Panc1 (cell line): ENCODE measurements at regions of chr20 and their contacts with region 1.

Region 1: GRCh38 chr20:13009682-13010406 is 1.1 kb downstream of the SPTLC3 start:
- DNase-seq: peak; percentile 10
- ATAC-seq: no peak
- H3K4me3 ChIP-seq: peak overlapping the region in 1 of 2 experiments; percentile 12; a peak in 1 of 4 replicates
- H3K27ac ChIP-seq: no peak overlapping the region
- H3K4me1 ChIP-seq: no peaks in the 10 kb centered on the region
- H3K27me3 ChIP-seq: no peaks in the 10 kb centered on the region
- CTCF ChIP-seq: no peak

Region 2: GRCh38 chr20:11924923-11925322 is 1084.9 kb before region 1 on chr20:
- CTCF ChIA-PET with region 1: no interaction called
- POLR2A ChIA-PET with region 1: no interaction called
- in situ Hi-C with region 1: no loop called
- intact Hi-C with region 1: loop called (anchors 5 kb)
- DNase-seq: no peak
- ATAC-seq: no peak
- H3K4me3 ChIP-seq: no peak overlapping the region
- H3K27ac ChIP-seq: no peak overlapping the region
- H3K4me1 ChIP-seq: no peaks in the 10 kb centered on the region
- H3K27me3 ChIP-seq: no peaks in the 10 kb centered on the region
- CTCF ChIP-seq: no peak

Region 3: GRCh38 chr20:12925214-12925755 is 84.6 kb before region 1 on chr20:
- CTCF ChIA-PET with region 1: no interaction called
- POLR2A ChIA-PET with region 1: no interaction called
- in situ Hi-C with region 1: no loop called
- intact Hi-C with region 1: no loop called
- DNase-seq: peak; percentile 41
- ATAC-seq: peak; percentile 85
- H3K4me3 ChIP-seq: peak overlapping the region in 1 of 2 experiments; percentile 35; a peak in 2 of 4 replicates
- H3K27ac ChIP-seq: no peak overlapping the region
- H3K4me1 ChIP-seq: no peaks in the 10 kb centered on the region
- H3K27me3 ChIP-seq: no peaks in the 10 kb centered on the region
- CTCF ChIP-seq: peak; percentile 79

Region 4: DNA sequence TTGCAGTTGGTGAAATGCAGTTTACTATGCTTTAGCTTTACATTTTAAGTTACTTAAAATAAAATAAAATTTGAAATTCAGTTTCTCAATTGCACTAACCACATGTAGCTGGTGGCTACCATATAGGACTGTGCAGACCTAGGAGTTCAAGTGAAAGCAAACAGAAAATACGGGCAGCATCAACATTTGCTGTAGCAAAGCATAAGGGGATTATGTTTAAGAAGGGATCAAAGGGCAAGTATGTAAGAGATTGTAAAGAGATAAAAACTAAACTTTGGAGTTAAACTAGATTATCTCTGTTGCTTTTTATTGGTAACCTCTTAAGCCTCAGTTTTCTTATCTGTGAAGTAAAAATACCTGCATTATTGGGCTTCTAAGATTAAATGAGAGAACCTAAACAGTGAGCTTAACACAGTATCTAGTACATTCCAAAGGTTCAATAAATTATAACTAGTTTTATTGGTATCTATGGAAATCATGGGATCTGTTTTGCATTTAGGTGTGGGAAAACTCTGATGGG is 80.2 kb after region 1 on chr20:
- CTCF ChIA-PET with region 1: no interaction called
- POLR2A ChIA-PET with region 1: interaction called, 14 read pairs
- in situ Hi-C with region 1: no loop called
- intact Hi-C with region 1: no loop called
- DNase-seq: no peak
- ATAC-seq: no peak
- H3K4me3 ChIP-seq: no peak overlapping the region
- H3K27ac ChIP-seq: no peak overlapping the region
- H3K4me1 ChIP-seq: no peaks in the 10 kb centered on the region
- H3K27me3 ChIP-seq: no peaks in the 10 kb centered on the region; the same call in 1 of the 2 replicates
- CTCF ChIP-seq: no peak

Region 5: GRCh38 chr20:13325033-13325432 is 315.2 kb after region 1 on chr20:
- CTCF ChIA-PET with region 1: no interaction called
- POLR2A ChIA-PET with region 1: no interaction called
- in situ Hi-C with region 1: no loop called
- intact Hi-C with region 1: no loop called
- DNase-seq: no peak
- ATAC-seq: 0 out of 2 replicates have a peak, but pooled peaks have one; percentile 65
- H3K4me3 ChIP-seq: no peak overlapping the region
- H3K27ac ChIP-seq: no peak overlapping the region
- H3K4me1 ChIP-seq: no peaks in the 10 kb centered on the region
- H3K27me3 ChIP-seq: no peaks in the 10 kb centered on the region
- CTCF ChIP-seq: peak; percentile 63